Heart right ventricle (tissue), 16 donors: ENCODE measurements at regions of chr9 and their contacts with region 1.

Region 1: GRCh38 chr9:128296337-128297220 is 20.5 kb downstream of the SWI5 start:
- DNase-seq: no peak
- ATAC-seq: no peak
- H3K4me3 ChIP-seq: no peak overlapping the region
- H3K27ac ChIP-seq: no peak overlapping the region
- H3K4me1 ChIP-seq: peaks cover 0 to 4% (median 0%) of the 10 kb centered on the region in 9 donors
- H3K27me3 ChIP-seq: no peaks in the 10 kb centered on the region
- CTCF ChIP-seq: no peak

Region 2: DNA sequence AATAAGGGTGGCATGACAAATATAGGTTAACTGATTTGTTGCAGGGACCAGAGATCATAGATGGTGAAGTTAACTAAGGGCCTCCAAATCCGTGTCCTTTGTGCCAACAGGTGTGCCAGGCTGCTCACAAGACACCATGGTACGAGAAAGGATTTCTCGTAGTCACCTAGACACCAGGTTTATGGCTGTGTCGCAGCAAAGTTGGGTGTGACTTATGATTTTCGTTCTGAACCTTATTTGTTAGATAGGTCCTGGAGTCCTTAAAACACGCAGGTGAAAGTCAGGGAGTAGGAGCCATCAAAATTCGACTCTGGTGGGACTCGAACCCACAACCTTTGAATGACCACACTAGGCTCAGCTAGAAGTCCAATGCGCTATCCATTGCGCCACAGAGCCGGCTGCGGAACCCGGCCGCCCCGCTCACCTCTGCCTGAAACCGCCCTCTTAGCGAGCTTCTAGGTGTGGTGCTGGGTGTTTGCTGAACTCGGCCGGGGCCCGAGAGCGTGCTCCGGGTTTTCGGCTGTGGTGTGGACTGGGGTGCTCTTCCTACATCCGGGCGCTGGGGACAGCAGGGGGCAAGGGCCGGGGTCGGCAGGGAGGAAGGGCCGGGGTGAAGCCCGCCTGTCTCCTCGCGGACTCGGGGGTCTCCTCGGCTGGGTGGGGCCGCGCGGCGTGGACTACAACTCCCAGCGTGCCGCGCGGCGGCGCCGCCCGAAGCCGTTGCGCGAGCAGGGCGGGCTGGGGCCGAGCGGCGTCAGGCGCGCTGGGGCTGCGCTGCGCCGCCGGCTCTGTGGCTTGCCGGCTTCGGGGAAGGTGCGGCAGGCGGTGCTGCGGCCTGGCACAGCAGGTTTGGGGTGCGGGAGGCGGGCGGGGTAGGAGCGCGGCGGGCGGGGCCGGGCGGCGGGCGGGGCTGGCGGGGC is 43.5 kb after region 1 on chr9 and contains the start of gene SLC27A4:
- intact Hi-C with region 1: loop called in 4 of 10 experiments (anchors 1 to 5 kb)
- DNase-seq: peak; percentile 58 to 80
- ATAC-seq: peak; percentile 90 to 95 (median 92)
- H3K4me3 ChIP-seq: peak within 1 kb of the TSS; percentile 58 to 96 (median 86)
- H3K27ac ChIP-seq: peak within 1 kb of the TSS in 9 of 10 donors; percentile 64 to 85 (median 77)
- H3K4me1 ChIP-seq: peaks cover 0 to 18% (median 13%) of the 10 kb centered on the region in 9 donors
- H3K27me3 ChIP-seq: no peaks in the 10 kb centered on the region
- CTCF ChIP-seq: peak in 1 of 9 donors; percentile 9
- total RNA-seq, gene SLC27A4: 10.0 to 26.3 (median 15.5) TPM

Region 3: DNA sequence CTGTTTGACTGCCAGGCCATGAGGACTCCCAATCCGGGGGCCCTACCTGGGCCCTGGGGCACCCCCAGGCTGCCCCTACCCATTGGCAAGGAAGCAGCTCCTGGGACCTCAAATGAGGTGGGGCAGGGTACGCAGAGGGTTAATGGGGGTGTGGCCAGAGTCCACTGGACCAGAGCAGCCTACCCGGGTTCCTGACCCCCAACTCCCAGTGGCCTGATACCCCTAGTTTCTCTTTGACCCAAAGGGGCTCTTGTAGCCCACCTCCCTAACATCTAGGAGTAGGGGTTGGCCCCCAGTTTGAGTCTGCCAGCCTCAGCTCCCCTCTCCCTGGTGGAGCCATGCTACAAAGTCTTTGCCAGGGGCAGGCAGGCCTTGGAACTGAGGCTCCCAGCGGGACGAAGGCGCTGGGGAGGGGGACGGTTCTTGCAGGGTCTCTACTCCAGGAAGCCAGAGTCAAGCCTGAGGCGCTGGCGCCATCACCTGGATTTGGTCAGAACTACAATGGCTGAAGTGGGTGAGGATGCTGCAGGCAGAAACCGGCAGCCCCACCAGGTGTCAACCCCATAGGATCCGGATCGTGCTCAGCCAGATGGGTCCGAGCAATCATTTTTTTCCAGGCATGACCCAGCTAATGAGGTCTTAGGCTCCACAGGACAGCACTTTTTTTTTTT is 115.7 kb after region 1 on chr9:
- intact Hi-C with region 1: loop called in 2 of 10 experiments (anchors 5 kb)
- DNase-seq: peak in 1 of 2 donors; percentile 43
- ATAC-seq: peak in 5 of 8 donors; percentile 32 to 76 (median 47)
- H3K4me3 ChIP-seq: no peak overlapping the region
- H3K27ac ChIP-seq: no peak overlapping the region
- H3K4me1 ChIP-seq: peaks cover 0 to 32% (median 5%) of the 10 kb centered on the region in 9 donors
- H3K27me3 ChIP-seq: peaks cover 0 to 82% (median 51%) of the 10 kb centered on the region in 7 donors
- CTCF ChIP-seq: peak; percentile 28 to 67 (median 63)

Region 4: GRCh38 chr9:128419061-128419925 is 122.7 kb after region 1 on chr9:
- intact Hi-C with region 1: loop called in 2 of 10 experiments (anchors 5 kb)
- DNase-seq: no peak
- ATAC-seq: peak in 1 of 8 donors; percentile 12
- H3K4me3 ChIP-seq: peak overlapping the region in 9 of 10 donors; percentile 89 to 99 (median 95)
- H3K27ac ChIP-seq: peak overlapping the region in 3 of 10 donors; percentile 68 to 83 (median 80)
- H3K4me1 ChIP-seq: peaks cover 11 to 28% (median 22%) of the 10 kb centered on the region in 9 donors
- H3K27me3 ChIP-seq: peaks cover 0 to 58% (median 44%) of the 10 kb centered on the region in 7 donors
- CTCF ChIP-seq: no peak

Region 5: GRCh38 chr9:128523199-128523925 is 226.8 kb after region 1 on chr9:
- intact Hi-C with region 1: loop called in 1 of 10 experiments (anchors 10 kb)
- DNase-seq: peak in 1 of 2 donors; percentile 41
- ATAC-seq: peak in 7 of 8 donors; percentile 22 to 65 (median 42)
- H3K4me3 ChIP-seq: no peak overlapping the region
- H3K27ac ChIP-seq: peak overlapping the region in 4 of 10 donors; percentile 6 to 31 (median 18)
- H3K4me1 ChIP-seq: peaks cover 0 to 12% (median 7%) of the 10 kb centered on the region in 9 donors
- H3K27me3 ChIP-seq: no peaks in the 10 kb centered on the region
- CTCF ChIP-seq: no peak